Right cardiac atrium (tissue), 5 donors: ENCODE measurements at regions of chr1 and their contacts with region 1.

Region 1: DNA sequence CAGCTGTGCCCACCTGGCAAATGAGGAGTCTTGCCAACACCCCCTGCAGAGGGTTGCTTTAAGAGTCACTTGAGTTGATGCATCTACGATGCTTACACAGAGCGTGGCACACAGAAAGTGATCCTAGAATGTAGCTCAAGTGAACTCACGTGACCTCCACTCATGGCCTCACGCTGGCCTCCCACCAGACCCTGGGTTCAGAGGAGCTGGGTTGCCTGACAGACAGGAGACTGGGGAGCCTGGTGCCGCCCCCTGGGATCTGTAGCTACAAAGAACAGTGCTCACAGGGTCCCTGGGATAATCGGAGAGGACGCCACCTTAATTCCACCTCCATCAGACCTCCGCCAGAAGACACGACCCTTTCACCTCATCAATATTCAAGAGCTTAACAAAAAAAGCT is 81.4 kb upstream of the CASZ1 start:
- DNase-seq: no peak
- ATAC-seq: no peak
- H3K4me3 ChIP-seq: no peak overlapping the region
- H3K27ac ChIP-seq: no peak overlapping the region
- H3K4me1 ChIP-seq: no peaks in the 10 kb centered on the region
- H3K27me3 ChIP-seq: no peaks in the 10 kb centered on the region

Region 2: DNA sequence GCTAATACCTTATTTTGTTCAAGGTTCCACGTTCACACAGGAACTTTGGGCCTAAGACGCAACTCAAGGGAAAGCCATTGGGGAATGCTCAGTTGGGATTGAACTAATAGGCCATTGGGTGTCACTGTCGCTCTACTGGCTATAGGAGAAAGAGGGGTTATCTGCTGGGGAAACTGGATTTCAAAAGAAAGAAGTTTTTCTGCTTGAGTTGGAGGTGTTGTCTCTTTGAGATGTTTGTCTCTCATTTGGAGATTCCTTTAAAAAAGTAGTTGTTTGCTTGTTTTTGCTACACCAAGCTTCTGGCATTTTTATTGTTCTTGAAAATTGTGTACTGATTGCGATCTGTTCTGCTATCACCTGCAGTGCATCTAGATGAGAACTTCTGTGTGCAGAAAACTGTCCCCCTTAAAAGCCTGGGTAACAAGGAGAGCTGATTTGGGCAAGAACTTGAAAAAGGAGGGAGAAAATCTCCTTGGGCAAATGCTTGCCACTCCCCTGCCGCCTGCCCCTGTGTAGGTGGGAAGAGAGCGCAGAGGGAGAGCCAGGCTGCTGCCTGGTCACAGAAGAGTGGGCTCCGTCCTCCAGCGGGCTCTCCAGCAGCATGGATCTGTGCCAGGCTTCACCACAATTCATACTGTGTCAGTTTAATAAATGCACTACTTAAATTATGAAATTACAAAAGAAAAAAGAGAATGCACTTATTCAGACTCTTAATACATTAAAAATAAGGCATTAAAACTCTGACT is 363.2 kb before region 1 on chr1:
- intact Hi-C with region 1: loop called in 1 of 4 experiments (anchors 5 kb)
- DNase-seq: no peak
- ATAC-seq: no peak
- H3K4me3 ChIP-seq: no peak overlapping the region
- H3K27ac ChIP-seq: no peak overlapping the region
- H3K4me1 ChIP-seq: peaks cover 14% of the 10 kb centered on the region
- H3K27me3 ChIP-seq: no peaks in the 10 kb centered on the region

Region 3: DNA sequence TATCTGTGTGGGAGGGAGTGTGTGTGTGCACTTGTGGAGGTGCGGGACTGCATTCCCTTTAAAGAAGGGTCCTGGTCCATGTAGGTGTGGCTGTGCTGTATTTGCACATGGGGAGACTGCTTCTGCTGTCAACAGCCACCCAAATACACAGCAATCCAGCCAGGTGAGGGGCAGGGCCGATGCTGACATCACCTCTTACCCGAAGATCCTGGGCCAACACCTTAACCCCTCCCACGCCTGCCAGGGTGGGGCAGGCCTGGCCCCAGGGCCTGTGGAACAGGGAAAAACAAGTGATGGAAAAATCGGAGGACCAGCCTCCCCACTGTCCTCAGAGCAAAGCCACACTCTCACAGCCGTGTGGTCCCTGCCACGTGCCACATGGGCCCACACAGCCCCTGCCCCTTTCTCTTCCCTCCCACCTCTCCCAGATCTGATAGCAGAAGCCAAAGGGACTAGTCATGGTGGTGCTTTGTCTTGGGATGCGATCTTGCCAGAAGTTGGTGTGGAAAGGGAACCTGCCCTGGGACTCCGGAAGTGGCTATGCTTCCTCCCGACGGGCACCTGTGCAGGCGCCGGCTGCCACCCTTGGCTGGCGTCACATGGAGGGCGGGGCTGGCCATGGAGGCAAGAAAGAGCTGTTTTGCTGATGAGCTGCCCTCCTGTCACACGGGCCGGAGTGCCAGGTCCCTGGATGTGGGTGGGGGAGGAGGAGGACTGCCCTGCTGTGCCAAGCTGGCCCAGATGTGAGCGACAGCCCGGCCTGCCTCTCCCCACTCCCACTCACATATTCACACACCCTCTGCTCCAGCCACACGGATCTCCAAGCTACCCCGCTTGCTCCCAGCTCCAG is 73.7 kb before region 1 on chr1:
- intact Hi-C with region 1: no loop called
- DNase-seq: no peak
- ATAC-seq: peak; percentile 39 to 45
- H3K4me3 ChIP-seq: no peak overlapping the region
- H3K27ac ChIP-seq: no peak overlapping the region
- H3K4me1 ChIP-seq: no peaks in the 10 kb centered on the region
- H3K27me3 ChIP-seq: no peaks in the 10 kb centered on the region